ENCODE measurements at regions of chr1 and their contacts with region 1.

Region 1: GRCh38 chr1:226062558-226063223 is at the start of gene H3-3A:
- DNase-seq: peak; percentile 98
- ATAC-seq: peak; percentile 87
- H3K4me3 Mint-ChIP-seq: peak within 1 kb of the TSS; percentile 100
- H3K27ac Mint-ChIP-seq: peak within 1 kb of the TSS; percentile 100
- H3K4me1 Mint-ChIP-seq: peaks cover 37% of the 10 kb centered on the region
- H3K27me3 Mint-ChIP-seq: no peaks in the 10 kb centered on the region
- total RNA-seq, gene H3-3A: 526 to 541 TPM

Region 2: DNA sequence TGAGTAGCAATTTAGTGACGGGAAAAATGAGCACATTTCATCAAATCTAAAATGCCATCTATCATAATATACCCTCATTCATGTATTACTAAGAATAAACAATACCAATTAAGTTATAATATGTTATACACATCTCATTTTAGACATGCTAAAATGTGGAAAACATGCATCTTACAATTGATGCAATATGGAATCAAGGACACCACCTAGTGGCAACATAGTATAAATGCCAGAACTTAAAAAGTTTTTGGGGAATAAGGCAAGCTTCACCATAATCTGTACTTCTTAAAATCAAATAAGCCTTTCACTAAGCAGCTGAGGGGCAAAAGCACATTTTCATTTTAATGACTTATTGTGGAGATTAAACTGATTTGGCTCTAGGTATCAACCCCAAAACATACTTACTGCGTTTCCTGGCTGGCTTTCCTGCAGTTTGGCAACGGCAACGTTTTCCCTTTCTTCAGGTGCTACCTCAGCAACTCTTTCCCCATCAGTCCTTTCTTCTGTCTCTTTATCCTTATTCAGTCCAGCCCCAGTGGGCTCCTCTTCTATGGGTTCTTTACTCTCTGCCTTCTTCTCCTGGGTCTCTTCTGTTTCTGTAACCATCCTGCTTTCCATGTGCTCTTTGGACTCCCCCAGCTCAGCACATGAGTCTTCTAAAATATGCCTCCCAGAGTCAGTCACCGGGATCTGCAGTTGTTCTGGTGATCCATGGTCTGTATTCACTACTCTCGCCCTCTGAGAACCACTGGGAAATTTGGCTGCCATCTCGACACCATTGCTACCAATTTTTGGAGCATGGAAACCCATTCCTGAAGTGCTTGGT is 75.0 kb before region 1 on chr1:
- CTCF ChIA-PET with region 1: interaction called, 38 read pairs
- POLR2A ChIA-PET with region 1: interaction called, 12 read pairs
- DNase-seq: no peak
- ATAC-seq: no peak
- H3K4me3 Mint-ChIP-seq: no peak overlapping the region
- H3K27ac Mint-ChIP-seq: no peak overlapping the region
- H3K4me1 Mint-ChIP-seq: peaks cover 32% of the 10 kb centered on the region
- H3K27me3 Mint-ChIP-seq: no peaks in the 10 kb centered on the region

Region 3: DNA sequence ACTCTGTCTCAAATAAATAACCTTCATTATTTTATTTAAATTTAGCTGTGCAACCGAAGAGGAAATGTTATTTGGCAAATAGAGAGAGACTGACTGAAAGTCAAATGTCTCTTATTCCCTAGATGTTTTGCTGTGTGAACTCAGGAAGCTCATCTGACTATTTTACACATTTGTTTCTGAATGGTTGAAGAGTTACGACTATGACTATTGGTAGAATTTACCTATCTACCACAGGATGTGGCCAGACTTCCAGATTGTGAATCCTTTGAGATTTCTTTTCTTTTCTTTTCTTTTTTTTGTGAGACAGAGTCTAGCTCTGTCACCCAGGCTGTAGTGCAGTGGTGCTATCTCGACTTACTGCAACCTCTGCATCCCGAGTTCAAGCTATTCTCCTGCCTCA is 58.3 kb before region 1 on chr1:
- CTCF ChIA-PET with region 1: interaction called, 61 read pairs
- POLR2A ChIA-PET with region 1: interaction called, 113 read pairs
- DNase-seq: no peak
- ATAC-seq: no peak
- H3K4me3 Mint-ChIP-seq: no peak overlapping the region
- H3K27ac Mint-ChIP-seq: peak overlapping the region; percentile 31
- H3K4me1 Mint-ChIP-seq: peaks cover 43% of the 10 kb centered on the region
- H3K27me3 Mint-ChIP-seq: no peaks in the 10 kb centered on the region

Region 4: DNA sequence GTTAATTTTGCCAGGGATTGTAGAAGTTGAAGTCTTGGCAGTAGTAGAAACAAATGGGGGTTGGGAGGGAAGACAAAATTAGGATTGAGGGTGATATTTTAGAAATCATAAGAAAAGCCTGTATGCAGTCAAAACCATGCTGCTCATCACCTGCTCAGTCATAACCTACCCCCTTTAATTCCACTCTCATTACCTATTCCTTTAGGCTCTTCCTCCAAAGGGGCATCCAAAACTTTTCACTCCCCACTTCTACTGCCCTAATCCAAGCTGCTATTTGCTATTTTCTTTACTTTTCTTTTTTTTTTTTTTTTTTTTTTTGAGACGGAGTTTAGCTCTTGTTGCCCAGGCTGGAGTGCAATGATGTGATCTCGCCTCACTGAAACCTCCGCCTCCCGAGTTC is 11.4 kb after region 1 on chr1:
- CTCF ChIA-PET with region 1: interaction called, 73 read pairs
- POLR2A ChIA-PET with region 1: interaction called, 8 read pairs
- DNase-seq: no peak
- ATAC-seq: peak; percentile 9
- H3K4me3 Mint-ChIP-seq: no peak overlapping the region
- H3K27ac Mint-ChIP-seq: no peak overlapping the region
- H3K4me1 Mint-ChIP-seq: peaks cover 12% of the 10 kb centered on the region
- H3K27me3 Mint-ChIP-seq: no peaks in the 10 kb centered on the region

Region 5: DNA sequence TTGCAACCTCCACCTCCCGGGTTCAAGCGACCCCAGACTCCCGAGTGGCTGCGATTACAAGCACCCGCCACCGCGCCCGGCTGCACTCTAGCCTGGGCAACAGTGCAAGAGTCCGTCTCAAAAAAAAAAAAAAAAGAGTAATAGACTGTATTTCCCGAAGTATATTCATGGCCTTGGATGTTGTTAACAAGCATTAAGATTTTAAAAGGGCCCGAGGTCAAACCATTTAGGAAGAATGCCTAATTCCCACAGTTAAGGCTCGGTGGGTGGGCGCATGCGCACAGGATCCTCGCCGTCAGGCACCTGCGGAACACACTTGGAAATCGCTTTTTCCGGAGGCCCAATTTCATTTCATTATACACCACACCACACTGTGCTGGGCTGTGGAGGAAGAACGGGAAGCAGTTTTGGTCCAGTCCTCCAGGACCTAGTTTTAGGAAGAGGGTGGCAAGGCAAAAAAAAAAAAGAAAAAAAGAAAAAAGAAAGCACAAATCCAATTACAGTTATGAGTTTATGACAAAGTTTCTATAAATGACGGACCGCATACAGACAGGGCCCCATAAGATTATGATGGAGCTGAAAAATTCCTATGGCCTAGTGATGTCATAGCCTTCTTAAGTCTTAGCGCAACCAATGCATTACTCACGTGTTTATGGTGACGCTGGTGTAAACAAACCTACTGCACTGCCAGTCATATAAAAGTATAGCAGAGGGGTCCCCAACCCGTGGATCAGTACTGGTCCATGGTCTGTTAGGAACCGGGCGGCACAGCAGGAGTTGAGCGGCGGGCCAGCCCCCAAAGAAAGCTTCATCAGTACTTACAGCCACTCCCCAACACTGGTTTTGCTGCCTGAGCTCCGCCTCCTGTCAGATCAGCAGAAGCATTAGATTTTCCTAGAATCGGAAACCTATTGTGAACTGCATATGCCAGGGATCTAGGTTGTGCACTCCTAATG is 38.0 kb after region 1 on chr1:
- CTCF ChIA-PET with region 1: interaction called, 26 read pairs
- POLR2A ChIA-PET with region 1: interaction called, 4 read pairs
- DNase-seq: peak; percentile 44
- ATAC-seq: peak; percentile 53
- H3K4me3 Mint-ChIP-seq: peak overlapping the region; percentile 80
- H3K27ac Mint-ChIP-seq: peak overlapping the region; percentile 30
- H3K4me1 Mint-ChIP-seq: peaks cover 16% of the 10 kb centered on the region
- H3K27me3 Mint-ChIP-seq: peaks cover 17% of the 10 kb centered on the region

Region 6: DNA sequence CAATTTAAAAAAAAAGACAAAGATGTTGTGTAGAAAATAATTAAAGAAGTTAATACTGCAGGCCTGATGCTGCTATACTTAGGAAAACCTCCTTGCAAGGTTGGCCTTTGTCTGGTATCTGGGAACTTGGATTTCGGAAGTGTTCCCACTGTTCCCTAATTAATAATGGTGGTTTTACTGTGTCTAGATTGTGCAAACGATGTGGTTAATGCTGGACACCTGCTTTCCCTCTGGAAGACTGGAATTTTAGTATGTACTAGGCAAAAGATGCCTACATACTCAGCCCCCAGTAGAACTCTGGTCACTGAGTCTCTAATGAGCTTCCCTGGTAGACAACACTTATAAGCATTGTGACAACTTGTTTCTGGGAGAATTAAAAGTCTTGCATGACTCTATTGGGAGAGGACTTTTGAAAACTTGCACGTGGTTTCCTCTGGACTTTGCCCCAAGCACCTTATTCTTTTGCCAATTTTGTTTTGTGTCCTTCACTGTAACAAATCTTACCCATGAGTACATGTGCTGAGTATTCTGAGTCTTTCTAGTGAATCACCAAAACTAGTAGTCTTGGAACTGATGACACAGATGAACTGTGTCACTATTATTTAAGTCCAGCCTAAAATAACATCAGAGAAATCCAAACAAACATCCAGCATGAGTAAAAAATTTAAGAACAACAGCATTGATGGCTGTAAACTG is 205.9 kb after region 1 on chr1:
- CTCF ChIA-PET with region 1: no interaction called
- POLR2A ChIA-PET with region 1: no interaction called
- DNase-seq: no peak
- ATAC-seq: no peak
- H3K4me3 Mint-ChIP-seq: no peak overlapping the region
- H3K27ac Mint-ChIP-seq: no peak overlapping the region
- H3K4me1 Mint-ChIP-seq: no peaks in the 10 kb centered on the region
- H3K27me3 Mint-ChIP-seq: no peaks in the 10 kb centered on the region

Region 7: GRCh38 chr1:226308723-226309315 is 246.1 kb after region 1 on chr1 and contains the start of gene LIN9:
- CTCF ChIA-PET with region 1: no interaction called
- POLR2A ChIA-PET with region 1: interaction called, 14 read pairs
- DNase-seq: peak; percentile 95
- ATAC-seq: peak; percentile 91
- H3K4me3 Mint-ChIP-seq: peak within 1 kb of the TSS; percentile 90
- H3K27ac Mint-ChIP-seq: peak within 1 kb of the TSS; percentile 92
- H3K4me1 Mint-ChIP-seq: peaks cover 28% of the 10 kb centered on the region
- H3K27me3 Mint-ChIP-seq: peaks cover 14% of the 10 kb centered on the region
- total RNA-seq, gene LIN9: 13.3 to 14.9 TPM

Region 8: DNA sequence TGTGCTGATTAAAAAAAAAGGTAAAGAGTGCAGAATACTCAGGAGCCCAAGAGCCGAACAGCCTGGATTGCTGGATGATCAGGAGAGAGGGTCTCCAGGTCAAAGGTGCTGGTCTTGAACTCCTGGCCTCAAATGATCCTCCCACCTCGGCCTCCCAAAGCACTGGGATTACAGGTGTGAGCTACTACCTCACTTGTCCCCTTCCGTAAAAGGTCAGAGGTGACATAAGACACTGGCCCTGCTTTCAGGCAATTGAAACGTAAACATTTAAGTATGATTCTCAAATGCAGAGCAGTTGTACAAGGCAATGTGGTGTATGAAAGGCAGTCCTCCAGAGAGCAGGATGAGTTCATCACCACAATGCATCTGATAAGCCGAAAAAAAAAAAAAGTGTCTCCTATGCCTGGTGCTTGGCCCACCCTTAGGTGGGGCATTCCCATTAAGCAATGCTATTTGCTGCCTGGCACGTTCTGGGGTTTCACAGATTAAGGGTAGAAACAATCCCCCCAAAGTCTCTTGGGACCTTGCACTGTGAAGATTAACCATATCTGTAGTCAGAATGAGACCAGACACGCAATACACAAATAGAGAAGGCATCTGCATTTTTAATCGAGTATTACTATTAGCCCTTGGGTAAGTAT is 297.5 kb after region 1 on chr1:
- CTCF ChIA-PET with region 1: no interaction called
- POLR2A ChIA-PET with region 1: no interaction called
- DNase-seq: no peak
- ATAC-seq: no peak
- H3K4me3 Mint-ChIP-seq: no peak overlapping the region
- H3K27ac Mint-ChIP-seq: no peak overlapping the region
- H3K4me1 Mint-ChIP-seq: no peaks in the 10 kb centered on the region
- H3K27me3 Mint-ChIP-seq: no peaks in the 10 kb centered on the region

Measured in activated CD8-positive, alpha-beta T cell treated with anti-CD3 and anti-CD28 coated beads, Interleukin-2, amount 10 ng/mL, durations not matched to agents 7 days and 5 days (primary cell).